Activated CD8-positive, alpha-beta T cell treated with anti-CD3 and anti-CD28 coated beads, Interleukin-2, amount 10 ng/mL, durations not matched to agents 7 days and 5 days (primary cell): ENCODE measurements at regions of chr3 and their contacts with region 1.

Region 1: DNA sequence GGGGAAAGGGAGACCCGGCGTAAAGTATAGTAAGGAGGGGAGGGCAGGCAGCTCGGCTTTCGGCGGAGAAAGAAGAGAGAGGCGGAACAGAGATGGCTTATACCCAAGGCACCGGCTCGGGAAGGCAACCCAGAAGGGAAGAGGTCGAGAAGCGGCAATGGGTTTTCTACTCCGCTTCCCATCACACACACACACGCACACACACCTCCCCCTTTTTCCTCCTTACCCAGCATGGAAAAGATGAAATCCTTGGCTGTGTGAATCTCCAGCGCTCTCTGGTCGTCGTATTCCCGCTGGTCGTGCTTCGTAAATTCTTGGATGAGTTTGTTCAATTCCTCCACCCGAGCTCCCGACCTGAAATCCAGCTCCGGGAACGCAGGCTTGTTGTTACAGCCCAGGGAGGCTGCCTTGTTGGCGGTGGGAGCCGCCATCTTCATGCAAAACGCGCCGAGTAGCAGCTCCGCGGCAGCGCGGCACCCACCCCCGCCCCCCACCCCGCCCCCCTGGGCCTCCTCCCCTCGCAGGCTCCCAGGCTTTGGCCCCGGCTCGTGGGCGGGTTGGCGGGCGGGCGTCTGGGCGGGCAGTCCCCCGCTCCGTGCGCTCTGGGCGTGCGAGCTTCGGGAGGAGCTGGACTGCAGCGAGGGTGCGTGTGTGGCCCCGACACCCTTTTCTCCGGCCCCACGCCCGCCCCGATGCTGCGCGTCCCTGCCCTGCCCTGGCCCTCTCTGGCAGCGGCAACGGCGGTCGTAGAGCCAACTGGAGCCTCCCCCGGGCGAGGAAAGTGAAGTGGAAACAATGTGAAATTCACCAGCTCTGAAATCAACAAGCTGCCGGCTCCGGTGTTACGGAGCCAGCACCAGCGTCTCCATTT is at the start of gene MB21D2:
- DNase-seq: peak; percentile 64
- ATAC-seq: peak; percentile 85
- H3K4me3 Mint-ChIP-seq: peak within 1 kb of the TSS; percentile 90
- H3K27ac Mint-ChIP-seq: peak within 1 kb of the TSS; percentile 87
- H3K4me1 Mint-ChIP-seq: peaks cover 44% of the 10 kb centered on the region
- H3K27me3 Mint-ChIP-seq: peaks cover 55% of the 10 kb centered on the region
- total RNA-seq, gene MB21D2: 6.5 to 7.2 TPM

Region 2: DNA sequence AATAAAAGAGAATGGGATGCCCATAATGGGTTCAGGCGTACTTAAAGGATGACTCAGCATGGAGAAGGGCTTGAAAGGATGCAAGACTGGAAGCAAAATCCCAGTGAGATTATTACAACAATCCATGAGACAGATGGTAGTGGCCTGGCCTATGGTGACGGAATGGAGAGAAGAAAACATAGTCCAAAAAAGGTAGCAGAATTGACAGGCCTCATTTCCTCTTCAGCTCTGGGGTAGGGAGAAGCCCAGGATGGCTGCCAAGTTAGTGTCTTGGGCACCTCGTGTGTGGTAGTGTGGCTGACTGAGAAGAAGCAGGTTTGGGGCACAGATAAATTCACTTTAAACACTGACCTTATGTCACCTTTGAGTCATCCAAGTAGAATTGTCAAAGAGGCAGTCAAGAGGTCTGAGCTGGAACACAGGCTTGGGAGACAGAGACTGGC is 18.1 kb before region 1 on chr3:
- CTCF ChIA-PET with region 1: interaction called, 15 read pairs
- POLR2A ChIA-PET with region 1: interaction called, 5 read pairs
- DNase-seq: no peak
- ATAC-seq: no peak
- H3K4me3 Mint-ChIP-seq: no peak overlapping the region
- H3K27ac Mint-ChIP-seq: peak overlapping the region; percentile 73
- H3K4me1 Mint-ChIP-seq: peaks cover 63% of the 10 kb centered on the region
- H3K27me3 Mint-ChIP-seq: peaks cover 16% of the 10 kb centered on the region

Region 3: DNA sequence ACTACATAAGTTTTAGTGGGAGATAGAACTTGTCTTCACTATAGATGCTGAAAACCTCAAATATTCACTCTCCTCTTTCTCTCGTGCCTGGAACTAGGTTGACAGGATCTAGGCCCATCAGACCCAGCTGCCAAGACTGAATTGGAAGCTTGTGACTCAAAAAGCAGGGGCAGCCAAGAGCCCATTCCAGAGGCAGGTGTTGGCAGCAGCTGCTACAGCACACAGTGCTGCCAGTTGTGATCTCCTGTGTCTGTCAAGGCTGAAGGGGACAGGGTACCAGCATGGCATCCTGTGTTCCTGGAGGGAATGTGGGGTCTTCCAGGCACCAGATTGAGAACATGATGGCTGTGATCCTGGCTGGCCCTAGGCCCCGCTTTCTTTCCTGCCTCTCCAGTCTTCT is 92.6 kb after region 1 on chr3:
- CTCF ChIA-PET with region 1: no interaction called
- POLR2A ChIA-PET with region 1: no interaction called
- DNase-seq: no peak
- ATAC-seq: no peak
- H3K4me3 Mint-ChIP-seq: no peak overlapping the region
- H3K27ac Mint-ChIP-seq: no peak overlapping the region
- H3K4me1 Mint-ChIP-seq: peaks cover 3% of the 10 kb centered on the region
- H3K27me3 Mint-ChIP-seq: no peaks in the 10 kb centered on the region